ENCODE measurements at regions of chr1 and their contacts with region 1.

Region 1: DNA sequence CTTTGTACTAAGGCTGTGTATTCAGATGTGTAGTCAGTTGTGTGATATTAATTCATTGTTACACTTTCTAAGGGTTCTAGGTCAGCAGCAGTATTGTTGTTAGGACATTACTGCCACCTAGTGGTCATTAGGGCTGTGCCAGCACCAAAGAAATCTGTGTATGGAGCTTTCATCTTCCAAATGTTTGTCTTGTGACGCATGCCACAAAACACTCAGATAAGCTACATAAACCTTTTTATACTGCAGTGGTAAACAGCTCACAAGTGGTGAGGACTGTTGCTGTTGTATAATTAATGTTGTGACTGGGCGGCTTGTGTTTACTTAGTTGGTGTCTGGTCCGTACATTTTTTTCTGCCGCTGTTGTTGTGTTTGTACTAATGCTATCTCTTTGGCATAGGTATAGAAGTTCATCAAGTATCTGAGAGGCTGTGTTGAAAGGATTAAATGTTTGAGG is 51.7 kb downstream of the S1PR1 start:
- DNase-seq: peak in 8 of 9 donors; percentile 48 to 83 (median 78)
- ATAC-seq: peak; percentile 83
- H3K4me3 ChIP-seq: no peak overlapping the region
- H3K4me3 Mint-ChIP-seq: peak overlapping the region in 6 of 10 donors; percentile 4 to 47 (median 20)
- H3K27ac ChIP-seq: peak overlapping the region; percentile 20
- H3K27ac Mint-ChIP-seq: peak overlapping the region; percentile 63 to 93 (median 80)
- H3K4me1 ChIP-seq: peaks cover 66 to 68% of the 10 kb centered on the region in 2 donors
- H3K4me1 Mint-ChIP-seq: peaks cover 55 to 82% (median 73%) of the 10 kb centered on the region in 7 donors
- H3K27me3 ChIP-seq: no peaks in the 10 kb centered on the region
- H3K27me3 Mint-ChIP-seq: no peaks in the 10 kb centered on the region

Region 2: GRCh38 chr1:100928128-100928527 is 360.4 kb before region 1 on chr1:
- CTCF ChIA-PET with region 1: interaction called, 88 read pairs
- POLR2A ChIA-PET with region 1: interaction called, 47 read pairs
- intact Hi-C with region 1: loop called in 1 of 2 experiments (anchors 1 kb)
- DNase-seq: peak in 1 of 9 donors; percentile 9
- ATAC-seq: peak; percentile 30
- H3K4me3 ChIP-seq: peak overlapping the region; percentile 15
- H3K4me3 Mint-ChIP-seq: no peak overlapping the region
- H3K27ac ChIP-seq: peak overlapping the region; percentile 74
- H3K27ac Mint-ChIP-seq: no peak overlapping the region
- H3K4me1 ChIP-seq: peaks cover 76 to 84% of the 10 kb centered on the region in 2 donors
- H3K4me1 Mint-ChIP-seq: peaks cover 26 to 61% (median 39%) of the 10 kb centered on the region in 7 donors
- H3K27me3 ChIP-seq: no peaks in the 10 kb centered on the region
- H3K27me3 Mint-ChIP-seq: no peaks in the 10 kb centered on the region

Region 3: GRCh38 chr1:101112051-101112780 is 176.3 kb before region 1 on chr1:
- CTCF ChIA-PET with region 1: interaction called, 10 read pairs
- POLR2A ChIA-PET with region 1: interaction called, 12 read pairs
- intact Hi-C with region 1: loop called in 1 of 2 experiments (anchors 1 kb)
- DNase-seq: peak; percentile 29 to 95 (median 91)
- ATAC-seq: peak; percentile 97
- H3K4me3 ChIP-seq: peak overlapping the region; percentile 33
- H3K4me3 Mint-ChIP-seq: peak overlapping the region; percentile 32 to 85 (median 78)
- H3K27ac ChIP-seq: peak overlapping the region; percentile 84
- H3K27ac Mint-ChIP-seq: peak overlapping the region; percentile 95 to 100 (median 99)
- H3K4me1 ChIP-seq: peaks cover 23 to 43% of the 10 kb centered on the region in 2 donors
- H3K4me1 Mint-ChIP-seq: peaks cover 32 to 79% (median 71%) of the 10 kb centered on the region in 7 donors
- H3K27me3 ChIP-seq: no peaks in the 10 kb centered on the region
- H3K27me3 Mint-ChIP-seq: no peaks in the 10 kb centered on the region

Region 4: GRCh38 chr1:101178688-101179491 is 109.6 kb before region 1 on chr1:
- CTCF ChIA-PET with region 1: no interaction called
- POLR2A ChIA-PET with region 1: interaction called, 3 read pairs
- intact Hi-C with region 1: loop called in 1 of 2 experiments (anchors 1 kb)
- DNase-seq: peak in 7 of 9 donors; percentile 40 to 61 (median 46)
- ATAC-seq: peak; percentile 78
- H3K4me3 ChIP-seq: peak overlapping the region; percentile 3
- H3K4me3 Mint-ChIP-seq: peak overlapping the region; percentile 63 to 90 (median 80)
- H3K27ac ChIP-seq: peak overlapping the region; percentile 60
- H3K27ac Mint-ChIP-seq: peak overlapping the region; percentile 86 to 98 (median 92)
- H3K4me1 ChIP-seq: peaks cover 12 to 20% of the 10 kb centered on the region in 2 donors
- H3K4me1 Mint-ChIP-seq: peaks cover 24 to 69% (median 51%) of the 10 kb centered on the region in 7 donors
- H3K27me3 ChIP-seq: no peaks in the 10 kb centered on the region
- H3K27me3 Mint-ChIP-seq: no peaks in the 10 kb centered on the region

Region 5: GRCh38 chr1:101262630-101263348 is 25.7 kb before region 1 on chr1:
- CTCF ChIA-PET with region 1: interaction called, 11 read pairs
- POLR2A ChIA-PET with region 1: interaction called, 224 read pairs
- intact Hi-C with region 1: loop called in 1 of 2 experiments (anchors 2 kb)
- DNase-seq: peak in 7 of 9 donors; percentile 38 to 71 (median 63)
- ATAC-seq: peak; percentile 60
- H3K4me3 ChIP-seq: peak overlapping the region; percentile 31
- H3K4me3 Mint-ChIP-seq: peak overlapping the region; percentile 76 to 88 (median 82)
- H3K27ac ChIP-seq: peak overlapping the region; percentile 37
- H3K27ac Mint-ChIP-seq: peak overlapping the region; percentile 79 to 97 (median 90)
- H3K4me1 ChIP-seq: peaks cover 87 to 91% of the 10 kb centered on the region in 2 donors
- H3K4me1 Mint-ChIP-seq: peaks cover 68 to 96% (median 85%) of the 10 kb centered on the region in 7 donors
- H3K27me3 ChIP-seq: no peaks in the 10 kb centered on the region
- H3K27me3 Mint-ChIP-seq: no peaks in the 10 kb centered on the region

Measured in naive thymus-derived CD4-positive, alpha-beta T cell (primary cell).